H1 (cell line): ENCODE measurements at regions of chr5 and their contacts with region 1.

Region 1: GRCh38 chr5:122295138-122295537 is 16.9 kb upstream of the SNCAIP start:
- DNase-seq: no peak
- H3K4me3 ChIP-seq: no peak overlapping the region
- H3K27ac ChIP-seq: no peak overlapping the region
- H3K4me1 ChIP-seq: peaks cover 3 to 11% (median 7%) of the 10 kb centered on the region in 4 experiments; a peak in 5 of 7 replicates
- H3K27me3 ChIP-seq: no peaks in the 10 kb centered on the region
- CTCF ChIP-seq: peak in 2 of 3 experiments; percentile 55 to 74; a peak in 3 of 4 replicates
- EP300 ChIP-seq: no peak
- POLR2A ChIP-seq: no peak
- RAD21 ChIP-seq: peak; percentile 49 to 69

Region 2: DNA sequence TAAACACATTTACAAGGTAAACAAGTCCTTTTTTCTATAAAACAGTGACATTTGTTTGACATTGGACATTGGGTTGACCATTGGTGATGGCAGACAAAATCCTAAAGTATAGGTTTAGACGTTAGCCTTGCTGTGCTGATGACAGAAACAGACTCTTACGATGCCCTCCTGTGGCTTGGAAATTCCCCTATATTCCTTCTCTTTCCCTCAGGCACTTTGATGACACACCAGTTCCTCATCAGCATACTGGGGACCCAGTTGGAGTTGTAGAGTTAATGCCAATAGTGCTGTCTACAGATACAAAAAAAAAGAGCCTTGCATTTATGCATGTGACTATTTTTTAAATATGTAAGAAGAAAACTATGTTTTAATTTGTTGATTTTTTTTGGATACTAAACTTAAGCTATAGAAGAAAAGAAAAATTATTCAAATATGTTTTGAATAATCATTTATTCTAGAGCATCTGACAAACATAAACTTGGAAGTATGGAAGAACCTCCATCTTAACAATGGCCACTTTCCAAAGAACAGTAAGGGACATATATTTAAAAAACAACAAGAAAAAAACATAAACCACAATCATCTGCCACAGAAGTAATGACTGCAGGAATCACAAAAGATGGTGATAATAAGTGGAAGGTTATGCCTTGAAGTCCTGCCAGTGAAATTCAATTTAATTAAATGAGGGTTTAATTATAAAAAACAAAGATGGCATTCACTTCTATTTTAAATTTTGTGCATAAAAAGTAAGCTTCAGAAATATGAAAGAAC is 58.7 kb before region 1 on chr5:
- CTCF ChIA-PET with region 1: no interaction called
- POLR2A ChIA-PET with region 1: no interaction called
- DNase-seq: no peak
- H3K4me3 ChIP-seq: no peak overlapping the region
- H3K27ac ChIP-seq: no peak overlapping the region
- H3K4me1 ChIP-seq: no peaks in the 10 kb centered on the region
- H3K27me3 ChIP-seq: no peaks in the 10 kb centered on the region
- CTCF ChIP-seq: no peak
- EP300 ChIP-seq: no peak
- POLR2A ChIP-seq: no peak
- RAD21 ChIP-seq: no peak

Region 3: DNA sequence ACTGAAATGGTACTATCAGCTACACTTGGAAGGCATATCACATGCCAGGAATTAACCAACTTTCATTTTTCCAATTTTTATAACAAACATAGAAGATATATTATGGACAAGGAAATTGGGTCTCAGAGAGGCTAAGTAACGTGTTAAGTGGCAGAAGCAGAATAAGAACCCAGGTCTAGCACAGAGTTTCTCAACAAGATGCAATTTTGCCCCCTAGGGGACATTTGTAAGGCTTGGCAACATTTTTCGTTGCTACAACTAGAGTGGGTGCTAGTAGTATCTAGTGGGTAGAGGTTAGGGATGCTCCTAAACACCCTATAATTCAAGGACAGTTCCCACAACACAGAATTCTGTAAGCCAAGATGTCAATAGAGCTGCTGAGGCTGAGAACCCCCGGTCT is 197.5 kb after region 1 on chr5:
- CTCF ChIA-PET with region 1: interaction called, 24 read pairs
- POLR2A ChIA-PET with region 1: no interaction called
- DNase-seq: no peak
- H3K4me3 ChIP-seq: no peak overlapping the region
- H3K27ac ChIP-seq: no peak overlapping the region
- H3K4me1 ChIP-seq: peaks cover 0 to 4% (median under 1%) of the 10 kb centered on the region in 4 experiments; a peak in 2 of 7 replicates
- H3K27me3 ChIP-seq: no peaks in the 10 kb centered on the region
- CTCF ChIP-seq: peak in 2 of 3 experiments; percentile 57 to 67; a peak in 3 of 4 replicates
- EP300 ChIP-seq: no peak
- POLR2A ChIP-seq: no peak
- RAD21 ChIP-seq: peak; percentile 75 to 83